ENCODE measurements at regions of chr4 and their contacts with region 1.

Region 1: DNA sequence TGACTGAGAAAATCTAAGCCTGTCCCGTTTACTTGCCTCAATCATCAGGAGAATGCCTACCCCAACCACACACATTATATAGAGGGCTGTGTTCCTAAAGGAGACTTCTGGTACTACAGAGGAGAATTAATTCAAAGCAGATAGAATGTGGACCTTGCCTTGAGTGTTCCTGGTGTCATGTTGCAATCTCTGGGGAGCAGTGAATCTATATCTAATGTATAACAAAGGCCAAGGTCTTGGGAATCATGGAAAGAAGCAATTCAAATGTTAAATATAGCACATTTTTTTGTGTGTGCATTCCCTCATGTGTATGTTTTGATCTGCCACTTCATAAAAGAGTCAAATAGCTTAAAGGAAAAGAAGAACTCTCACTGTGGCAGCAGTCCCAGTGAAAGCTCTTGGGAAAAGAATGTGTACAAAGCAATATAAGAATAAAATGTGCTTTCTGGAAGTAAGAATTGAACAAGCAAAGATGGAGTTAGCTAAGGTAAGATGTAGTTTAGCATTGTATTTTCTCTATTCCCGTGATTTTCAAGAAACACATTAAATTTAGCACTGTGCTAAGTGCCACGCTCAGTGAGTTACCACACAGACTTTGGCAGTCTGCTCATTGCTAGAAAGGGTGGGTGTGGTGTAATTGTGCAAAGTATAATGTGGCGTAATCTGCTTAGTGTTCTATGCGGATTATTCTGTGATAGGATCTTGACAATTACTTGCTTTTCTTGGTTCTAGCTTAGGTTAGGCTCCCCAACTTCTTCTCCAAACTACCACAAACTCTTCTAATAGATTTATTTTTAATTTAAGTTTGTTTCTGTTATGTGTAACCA is 13.7 kb downstream of the ADH6 start:
- DNase-seq: no peak
- ATAC-seq: peak in 2 of 4 donors; percentile 68 to 78
- H3K4me3 ChIP-seq: no peak overlapping the region
- H3K27ac ChIP-seq: no peak overlapping the region
- H3K4me1 ChIP-seq: no peaks in the 10 kb centered on the region
- H3K27me3 ChIP-seq: no peaks in the 10 kb centered on the region
- CTCF ChIP-seq: no peak

Region 2: DNA sequence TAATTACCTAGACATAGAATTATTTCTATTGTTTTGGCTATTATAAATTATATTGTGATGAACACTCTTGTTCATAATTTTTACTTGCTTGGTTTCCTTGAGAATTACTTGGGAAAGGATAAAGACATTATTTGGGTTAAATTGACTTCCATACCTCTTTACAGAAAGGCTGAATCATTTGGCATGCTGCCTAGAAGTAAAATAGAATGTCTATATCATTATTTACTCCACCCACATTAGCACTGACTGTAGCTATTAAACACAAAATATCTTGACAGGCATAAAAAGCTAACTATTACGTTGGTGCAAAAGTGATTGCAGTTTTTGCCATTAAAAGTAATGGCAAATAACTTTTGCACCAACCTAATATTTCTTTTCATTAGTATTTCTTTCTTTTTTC is 43.3 kb after region 1 on chr4:
- intact Hi-C with region 1: no loop called
- DNase-seq: no peak
- ATAC-seq: no peak
- H3K4me3 ChIP-seq: no peak overlapping the region
- H3K27ac ChIP-seq: no peak overlapping the region
- H3K4me1 ChIP-seq: no peaks in the 10 kb centered on the region
- H3K27me3 ChIP-seq: no peaks in the 10 kb centered on the region
- CTCF ChIP-seq: no peak

Region 3: DNA sequence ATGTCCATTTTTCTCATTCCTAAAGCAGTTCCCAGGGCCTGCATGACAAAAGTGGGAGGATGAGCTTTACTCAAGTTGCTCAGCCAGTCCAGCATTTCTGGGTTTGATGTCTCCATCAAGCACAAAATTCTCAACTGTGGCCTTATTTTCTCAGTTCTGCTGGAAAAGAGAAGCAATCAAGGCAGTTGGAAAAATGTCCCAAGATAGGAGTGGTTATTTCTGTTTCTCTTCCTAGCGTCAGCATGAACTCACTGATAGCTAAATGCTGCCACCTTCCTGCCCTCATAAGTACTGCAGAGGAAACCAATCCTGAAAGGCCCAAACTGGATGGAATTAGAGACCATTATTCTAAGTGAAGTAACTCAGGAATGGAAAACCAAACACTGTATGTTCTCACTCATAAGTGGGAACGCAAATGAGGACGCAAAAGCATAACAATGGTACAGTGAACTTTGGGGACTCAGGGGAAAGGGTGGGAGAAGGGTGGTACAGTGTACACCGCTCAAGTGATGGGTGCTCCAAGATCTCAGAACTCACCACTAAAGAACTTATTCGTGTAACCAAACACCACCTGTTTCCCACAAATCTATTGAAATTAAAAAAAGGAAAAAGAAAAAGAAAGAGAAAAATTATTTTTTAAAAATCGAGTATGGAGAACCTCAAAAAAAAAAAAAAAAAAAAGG is 200.2 kb after region 1 on chr4:
- intact Hi-C with region 1: loop called (anchors 5 kb)
- DNase-seq: peak; percentile 45 to 49
- ATAC-seq: peak; percentile 77 to 90 (median 86)
- H3K4me3 ChIP-seq: no peak overlapping the region
- H3K27ac ChIP-seq: no peak overlapping the region
- H3K4me1 ChIP-seq: peaks cover 10% of the 10 kb centered on the region
- H3K27me3 ChIP-seq: no peaks in the 10 kb centered on the region
- CTCF ChIP-seq: peak; percentile 96

Measured in psoas muscle (tissue), 8 donors.